ENCODE measurements at regions of chr16 and their contacts with region 1.

Region 1: DNA sequence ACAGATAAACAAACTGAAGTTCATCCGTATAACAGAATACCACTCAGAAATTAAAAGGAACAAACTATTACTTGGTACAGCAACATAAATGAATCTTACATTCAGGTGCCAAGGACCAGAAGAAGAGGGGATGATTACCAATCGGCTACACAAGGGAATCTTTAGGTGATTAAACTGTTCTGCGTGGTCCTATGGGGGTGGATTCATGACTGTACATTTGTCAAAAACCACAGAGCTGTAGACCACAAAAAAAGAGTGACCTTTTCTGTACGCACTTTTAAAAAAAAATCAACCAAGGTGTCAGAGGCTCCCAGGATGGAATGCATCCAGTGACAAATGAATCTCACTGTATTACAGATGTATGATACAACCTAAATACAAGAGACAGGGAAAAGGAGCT is 110.8 kb downstream of the CDYL2 start:
- DNase-seq: no peak
- H3K4me3 Mint-ChIP-seq: no peak overlapping the region
- H3K27ac Mint-ChIP-seq: peak overlapping the region; percentile 71
- H3K4me1 Mint-ChIP-seq: peaks cover 83% of the 10 kb centered on the region
- H3K27me3 Mint-ChIP-seq: peaks cover 1% of the 10 kb centered on the region

Region 2: GRCh38 chr16:80631581-80631980 is 62.0 kb before region 1 on chr16:
- intact Hi-C with region 1: no loop called
- DNase-seq: no peak
- H3K4me3 Mint-ChIP-seq: no peak overlapping the region
- H3K27ac Mint-ChIP-seq: no peak overlapping the region
- H3K4me1 Mint-ChIP-seq: peaks cover 10% of the 10 kb centered on the region
- H3K27me3 Mint-ChIP-seq: no peaks in the 10 kb centered on the region

Region 3: DNA sequence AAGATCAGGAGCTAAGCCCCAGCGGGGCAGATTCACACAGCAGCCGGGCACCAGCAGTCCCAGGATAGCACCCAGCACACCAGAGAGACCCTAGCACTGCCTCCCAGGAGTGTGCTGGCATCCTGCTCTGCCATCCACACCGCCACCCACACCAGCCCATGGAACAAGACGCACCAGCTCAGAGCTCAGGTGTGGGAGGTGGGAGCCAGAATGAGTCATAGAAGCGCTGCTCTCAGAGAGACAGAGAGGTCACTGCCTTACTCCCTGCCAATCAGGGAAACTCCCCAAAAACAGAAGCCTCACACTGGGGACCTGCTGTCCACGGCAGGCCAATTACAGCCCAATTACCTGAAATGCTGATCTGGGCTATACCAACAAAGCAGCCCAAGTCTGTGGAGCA is 46.0 kb after region 1 on chr16:
- intact Hi-C with region 1: loop called (anchors 2 kb)
- DNase-seq: no peak
- H3K4me3 Mint-ChIP-seq: no peak overlapping the region
- H3K27ac Mint-ChIP-seq: peak overlapping the region; percentile 74
- H3K4me1 Mint-ChIP-seq: peaks cover 61% of the 10 kb centered on the region
- H3K27me3 Mint-ChIP-seq: no peaks in the 10 kb centered on the region